ENCODE measurements at regions of chr17 and their contacts with region 1.

Region 1: DNA sequence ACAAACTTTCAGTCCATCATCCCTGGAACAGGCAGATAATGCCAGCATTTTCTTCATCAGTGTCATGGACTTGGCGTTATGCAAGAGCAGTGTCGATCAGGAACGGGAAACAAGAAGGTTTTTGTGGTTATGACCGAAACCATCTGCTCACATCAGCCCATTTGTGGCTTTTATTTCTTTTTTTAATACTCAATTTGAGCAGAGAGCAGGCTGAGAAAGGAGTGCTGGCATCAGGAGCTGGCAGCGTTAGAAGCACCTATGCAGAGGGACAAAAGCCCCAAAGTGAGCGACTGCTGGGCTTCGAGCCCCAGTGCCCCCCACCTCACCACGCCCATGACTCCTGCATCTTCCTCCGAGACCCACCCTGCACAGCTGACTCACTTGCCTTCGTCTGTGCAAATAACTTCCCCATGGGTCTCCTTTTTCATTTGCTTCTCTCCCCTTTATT is 16.2 kb upstream of the CD300E start:
- DNase-seq: peak; percentile 18
- H3K4me3 Mint-ChIP-seq: no peak overlapping the region
- H3K27ac Mint-ChIP-seq: no peak overlapping the region
- H3K4me1 Mint-ChIP-seq: peaks cover 10% of the 10 kb centered on the region
- H3K27me3 Mint-ChIP-seq: peaks cover 27% of the 10 kb centered on the region

Region 2: GRCh38 chr17:74579900-74580299 is 59.8 kb before region 1 on chr17:
- CTCF ChIA-PET with region 1: no interaction called
- POLR2A ChIA-PET with region 1: no interaction called
- intact Hi-C with region 1: no loop called
- DNase-seq: no peak
- H3K4me3 Mint-ChIP-seq: no peak overlapping the region
- H3K27ac Mint-ChIP-seq: no peak overlapping the region
- H3K4me1 Mint-ChIP-seq: peaks cover 9% of the 10 kb centered on the region
- H3K27me3 Mint-ChIP-seq: peaks cover 3% of the 10 kb centered on the region

Region 3: DNA sequence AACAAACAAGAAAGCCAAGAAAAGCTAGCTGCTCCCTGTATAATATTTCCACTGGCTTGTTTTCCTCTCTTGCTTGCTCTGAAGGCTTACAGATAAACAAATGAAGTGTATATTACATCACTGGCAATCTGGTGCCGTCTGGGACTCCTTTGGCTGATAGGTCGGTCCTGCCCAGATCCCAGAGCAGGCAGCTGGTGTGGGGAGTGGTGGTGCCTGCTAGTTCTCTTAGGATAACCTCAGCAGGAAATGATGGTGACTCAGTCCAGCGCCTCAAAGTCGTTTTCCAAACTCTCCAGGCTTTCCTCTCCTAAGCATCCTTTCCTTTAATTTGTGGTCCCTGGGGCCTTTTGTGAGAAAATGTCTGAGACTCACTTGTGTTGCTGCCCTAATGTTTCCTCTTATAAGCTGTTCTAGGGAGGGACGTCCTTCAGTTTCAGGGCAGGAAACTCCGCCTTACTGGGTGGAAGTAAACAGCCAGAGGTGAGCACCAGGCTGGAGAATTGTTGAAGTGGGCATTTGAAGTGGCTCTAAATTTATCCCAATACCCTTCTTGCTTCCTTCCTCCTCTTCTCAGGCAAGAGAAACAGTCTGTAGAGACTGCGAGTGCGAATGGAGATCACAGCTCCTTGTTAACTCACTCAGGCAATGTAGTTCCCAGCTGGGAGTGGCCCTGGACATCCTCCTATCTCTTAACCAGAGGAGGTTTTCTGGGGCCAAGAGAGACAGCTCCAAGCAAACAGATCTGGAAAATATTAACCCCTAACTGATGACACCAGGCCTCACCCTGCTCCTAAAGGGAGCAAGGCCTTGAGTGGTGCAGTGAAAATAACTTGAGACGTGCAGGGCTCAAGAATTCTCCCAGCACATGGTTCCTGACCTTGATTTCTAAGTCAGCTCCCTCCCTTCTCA is 38.1 kb after region 1 on chr17:
- CTCF ChIA-PET with region 1: no interaction called
- POLR2A ChIA-PET with region 1: no interaction called
- intact Hi-C with region 1: loop called (anchors 5 kb)
- DNase-seq: no peak
- H3K4me3 Mint-ChIP-seq: no peak overlapping the region
- H3K27ac Mint-ChIP-seq: no peak overlapping the region
- H3K4me1 Mint-ChIP-seq: peaks cover 17% of the 10 kb centered on the region
- H3K27me3 Mint-ChIP-seq: peaks cover 17% of the 10 kb centered on the region

Measured in activated CD4-positive, alpha-beta memory T cell treated with anti-CD3 and anti-CD28 coated beads for 36 hours (primary cell).